A673 (cell line): ENCODE measurements at regions of chr22 and their contacts with region 1.

Region 1: DNA sequence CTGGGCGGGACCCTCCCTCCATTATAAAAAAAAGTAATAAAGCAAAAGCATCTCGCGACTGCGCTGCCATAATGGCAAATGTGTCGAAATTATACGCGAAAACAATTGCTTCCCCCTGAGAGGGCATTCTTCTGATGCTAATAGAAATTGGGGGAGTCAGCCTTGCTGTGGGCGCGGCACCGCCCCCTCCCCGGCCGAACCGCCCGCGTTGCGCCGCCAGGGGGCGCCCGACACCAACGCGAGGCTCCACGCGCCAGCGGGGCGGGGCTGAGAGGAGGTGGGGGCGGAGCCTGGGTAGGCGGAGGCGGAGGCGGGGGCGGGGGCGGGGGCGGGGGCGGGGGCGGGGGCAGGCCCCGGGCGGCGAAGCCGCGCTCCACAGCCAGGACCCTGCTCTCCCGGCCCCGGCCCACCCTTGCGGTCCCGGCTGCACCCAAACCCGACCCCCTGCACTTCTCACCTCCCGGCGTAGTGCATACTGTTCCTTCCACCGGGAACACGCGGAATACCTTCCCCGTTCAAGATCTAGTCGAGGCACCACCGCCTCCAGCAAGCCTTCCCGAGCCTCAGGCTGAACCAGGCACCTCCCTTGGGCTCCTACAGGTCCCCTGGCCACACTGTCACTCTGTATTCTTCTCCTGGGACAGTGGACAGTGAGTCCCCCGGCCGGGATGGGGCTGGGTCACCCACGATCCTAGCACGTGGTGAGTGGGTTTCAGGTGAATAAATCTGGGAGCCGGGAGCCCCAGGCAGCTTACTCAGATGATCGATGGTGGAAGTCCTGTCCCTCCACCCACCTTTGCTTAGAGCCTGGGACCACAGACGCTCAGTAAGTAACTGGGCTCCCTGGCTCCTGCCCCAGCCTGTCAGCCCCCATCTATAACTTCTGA is 15.5 kb upstream of the UPK3A start:
- DNase-seq: peak; percentile 79
- H3K4me3 ChIP-seq: peak overlapping the region; percentile 63
- H3K27ac ChIP-seq: no peak overlapping the region
- H3K4me1 ChIP-seq: peaks cover 11% of the 10 kb centered on the region
- H3K27me3 ChIP-seq: no peaks in the 10 kb centered on the region
- CTCF ChIP-seq: peak; percentile 68

Region 2: DNA sequence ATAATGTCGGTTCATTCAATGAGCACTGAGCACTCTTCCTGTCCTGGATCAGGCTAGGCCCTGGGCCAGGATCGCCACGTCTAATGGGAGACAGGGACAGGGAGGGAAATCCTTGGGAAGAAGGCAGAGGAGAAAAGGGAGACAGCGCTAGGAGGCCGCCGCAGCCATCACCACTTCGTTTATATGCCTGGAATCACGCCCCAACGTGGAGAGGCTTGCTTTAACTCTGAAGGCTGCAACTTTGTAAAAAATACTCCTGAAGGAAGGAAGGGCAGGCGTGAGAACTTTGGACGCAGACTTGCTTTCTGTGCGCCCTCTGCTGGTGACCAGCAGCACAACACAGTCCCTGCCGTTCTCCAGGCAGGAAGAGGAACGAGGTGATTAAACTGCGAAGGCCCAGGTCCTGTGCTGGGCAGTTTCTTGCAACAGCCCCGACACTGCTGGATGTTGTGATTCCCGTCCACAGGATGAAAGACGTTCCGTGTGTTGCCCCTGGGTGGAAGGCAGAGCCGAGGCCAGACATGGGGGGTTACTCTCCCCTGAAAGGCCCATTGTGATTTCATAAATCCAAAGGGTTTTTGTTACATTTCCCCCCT is 166.4 kb after region 1 on chr22:
- CTCF ChIA-PET with region 1: no interaction called
- POLR2A ChIA-PET with region 1: no interaction called
- intact Hi-C with region 1: loop called (anchors 1 kb)
- DNase-seq: peak; percentile 89
- H3K4me3 ChIP-seq: no peak overlapping the region
- H3K27ac ChIP-seq: no peak overlapping the region
- H3K4me1 ChIP-seq: peaks cover 4% of the 10 kb centered on the region
- H3K27me3 ChIP-seq: no peaks in the 10 kb centered on the region
- CTCF ChIP-seq: peak; percentile 98

Region 3: DNA sequence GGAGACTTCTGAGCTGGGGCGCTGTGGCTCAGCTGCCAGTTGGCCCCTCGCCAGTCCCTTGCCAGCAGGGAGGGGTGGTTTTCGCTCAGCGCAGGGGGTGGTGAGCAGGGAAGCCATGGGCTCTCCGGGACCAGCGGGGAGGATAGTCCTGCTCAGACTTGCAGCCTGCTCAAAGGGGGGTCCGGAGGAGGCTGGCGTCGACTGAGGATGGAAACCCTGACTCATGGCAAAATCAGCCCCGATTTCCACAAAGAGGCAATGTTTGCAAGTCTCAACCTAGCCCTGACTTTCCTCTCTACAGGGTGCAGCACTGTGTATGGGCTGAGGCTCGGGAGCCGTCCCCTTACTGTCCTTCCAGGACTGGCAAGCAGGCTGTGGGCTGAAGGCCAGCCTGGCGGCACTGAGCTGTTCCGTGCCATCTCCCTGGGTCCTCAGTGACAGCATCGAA is 268.6 kb after region 1 on chr22:
- CTCF ChIA-PET with region 1: interaction called, 3 read pairs
- POLR2A ChIA-PET with region 1: no interaction called
- intact Hi-C with region 1: loop called (anchors 5 kb)
- DNase-seq: peak; percentile 95
- H3K4me3 ChIP-seq: peak overlapping the region; percentile 13
- H3K27ac ChIP-seq: peak overlapping the region; percentile 87
- H3K4me1 ChIP-seq: peaks cover 38% of the 10 kb centered on the region
- H3K27me3 ChIP-seq: no peaks in the 10 kb centered on the region
- CTCF ChIP-seq: no peak

Region 4: GRCh38 chr22:45553351-45554039 is 284.3 kb after region 1 on chr22:
- CTCF ChIA-PET with region 1: interaction called, 6 read pairs
- POLR2A ChIA-PET with region 1: no interaction called
- intact Hi-C with region 1: loop called (anchors 1 kb)
- DNase-seq: peak; percentile 86
- H3K4me3 ChIP-seq: no peak overlapping the region
- H3K27ac ChIP-seq: no peak overlapping the region
- H3K4me1 ChIP-seq: no peaks in the 10 kb centered on the region
- H3K27me3 ChIP-seq: no peaks in the 10 kb centered on the region
- CTCF ChIP-seq: peak; percentile 99